ENCODE measurements at regions of chr12 and their contacts with region 1.

Region 1: DNA sequence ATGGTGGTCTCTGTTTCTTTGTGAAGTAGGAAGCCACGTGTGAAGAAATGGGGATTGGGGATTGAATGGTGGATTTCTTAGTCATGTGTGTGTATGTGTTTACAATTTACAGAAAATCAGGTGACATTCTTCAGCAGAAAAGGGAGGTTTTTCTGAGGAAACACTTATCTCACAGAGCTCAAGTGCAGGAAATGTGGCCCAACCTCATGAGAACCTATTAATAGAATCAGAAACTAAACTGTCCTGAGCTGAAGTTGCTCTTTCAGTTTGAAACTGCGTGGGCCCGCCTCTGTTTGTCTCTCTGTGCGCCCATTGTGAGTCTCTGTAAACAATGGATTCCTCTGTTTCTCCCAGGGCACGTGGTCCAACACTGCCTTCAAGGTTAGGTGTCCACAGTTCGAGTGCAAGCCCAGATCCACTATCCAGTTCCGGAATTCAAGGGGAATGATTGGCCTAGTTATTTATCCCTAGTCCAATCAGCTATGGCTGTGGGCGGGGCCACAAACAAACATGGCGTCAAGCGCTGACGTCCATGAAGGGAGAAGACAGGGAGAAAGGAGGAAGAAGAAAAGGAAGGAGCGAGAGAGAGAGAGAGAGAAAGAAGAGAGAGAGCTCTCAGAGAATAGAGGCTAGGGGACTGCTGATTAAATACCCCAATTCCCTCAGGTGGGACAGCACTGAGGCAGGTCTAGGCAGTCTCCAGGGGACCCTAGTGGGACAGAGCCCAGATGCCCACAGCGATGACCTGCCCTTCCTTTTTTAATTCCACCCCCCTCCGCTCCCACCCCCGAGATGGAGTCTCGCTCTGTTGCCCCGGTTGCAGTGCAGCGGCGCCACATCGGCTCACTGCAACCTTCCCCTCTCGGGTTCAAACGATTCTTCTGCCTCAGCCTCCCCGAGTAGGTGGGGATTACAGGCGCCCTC is 31.4 kb upstream of the C12orf76 start:
- DNase-seq: no peak
- H3K4me3 ChIP-seq: no peak overlapping the region
- H3K27ac ChIP-seq: no peak overlapping the region
- H3K4me1 ChIP-seq: no peaks in the 10 kb centered on the region
- H3K27me3 ChIP-seq: peaks cover 9% of the 10 kb centered on the region; the same call in 1 of the 2 replicates
- CTCF ChIP-seq: no peak

Region 2: GRCh38 chr12:110090266-110091135 is 10.8 kb after region 1 on chr12:
- CTCF ChIA-PET with region 1: no interaction called
- POLR2A ChIA-PET with region 1: interaction called, 11 read pairs
- intact Hi-C with region 1: no loop called
- DNase-seq: no peak
- H3K4me3 ChIP-seq: no peak overlapping the region
- H3K27ac ChIP-seq: no peak overlapping the region
- H3K4me1 ChIP-seq: no peaks in the 10 kb centered on the region
- H3K27me3 ChIP-seq: no peaks in the 10 kb centered on the region; the same call in 1 of the 2 replicates
- CTCF ChIP-seq: no peak

Measured in PC-9 (cell line).